PC-3 (cell line): ENCODE measurements at regions of chr5 and their contacts with region 1.

Region 1: DNA sequence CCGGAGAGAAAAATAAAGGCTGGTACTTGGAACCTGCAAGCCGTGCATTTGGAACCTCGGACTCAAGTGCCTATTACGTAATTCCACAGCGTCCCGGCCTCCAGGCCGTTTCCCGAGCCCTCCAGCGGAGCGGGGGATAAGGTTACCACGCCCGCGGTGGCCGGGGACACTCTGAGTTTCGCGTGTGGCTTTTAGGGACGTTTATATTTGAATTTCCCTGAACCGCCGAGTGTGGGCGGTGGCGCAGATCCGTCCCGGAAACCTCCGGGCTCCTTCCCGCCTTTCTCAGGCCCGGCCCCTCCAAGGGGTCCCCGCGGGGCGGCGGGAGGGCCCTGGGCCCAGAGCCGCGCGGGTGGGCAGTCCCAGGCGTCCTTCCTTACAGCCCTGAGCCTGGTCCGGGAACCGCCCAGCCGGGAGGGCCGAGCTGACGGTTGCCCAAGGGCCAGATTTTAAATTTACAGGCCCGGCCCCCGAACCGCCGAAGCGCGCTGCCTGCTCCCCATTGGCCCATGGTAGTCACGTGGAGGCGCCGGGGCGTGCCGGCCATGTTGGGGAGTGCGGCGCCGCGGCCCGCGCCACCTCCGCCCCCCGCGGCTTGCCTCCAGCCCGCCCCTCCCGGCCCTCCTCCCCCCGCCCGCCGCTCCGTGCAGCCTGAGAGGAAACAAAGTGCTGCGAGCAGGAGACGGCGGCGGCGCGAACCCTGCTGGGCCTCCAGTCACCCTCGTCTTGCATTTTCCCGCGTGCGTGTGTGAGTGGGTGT is at the start of gene LMNB1:
- DNase-seq: peak; percentile 96
- ATAC-seq: peak; percentile 70
- H3K4me3 ChIP-seq: peak within 1 kb of the TSS; percentile 81
- H3K27ac ChIP-seq: peak within 1 kb of the TSS; percentile 87
- H3K4me1 ChIP-seq: peaks cover 13% of the 10 kb centered on the region
- H3K27me3 ChIP-seq: no peaks in the 10 kb centered on the region
- CTCF ChIP-seq: no peak
- total RNA-seq, gene LMNB1: 119 and 151 TPM in 2 replicates

Region 2: GRCh38 chr5:126348855-126349635 is 427.6 kb before region 1 on chr5:
- CTCF ChIA-PET with region 1: no interaction called
- POLR2A ChIA-PET with region 1: no interaction called
- intact Hi-C with region 1: loop called (anchors 10 kb)
- DNase-seq: no peak
- ATAC-seq: no peak
- H3K4me3 ChIP-seq: no peak overlapping the region
- H3K27ac ChIP-seq: no peak overlapping the region
- H3K4me1 ChIP-seq: peaks cover 36% of the 10 kb centered on the region
- H3K27me3 ChIP-seq: no peaks in the 10 kb centered on the region
- CTCF ChIP-seq: no peak

Region 3: DNA sequence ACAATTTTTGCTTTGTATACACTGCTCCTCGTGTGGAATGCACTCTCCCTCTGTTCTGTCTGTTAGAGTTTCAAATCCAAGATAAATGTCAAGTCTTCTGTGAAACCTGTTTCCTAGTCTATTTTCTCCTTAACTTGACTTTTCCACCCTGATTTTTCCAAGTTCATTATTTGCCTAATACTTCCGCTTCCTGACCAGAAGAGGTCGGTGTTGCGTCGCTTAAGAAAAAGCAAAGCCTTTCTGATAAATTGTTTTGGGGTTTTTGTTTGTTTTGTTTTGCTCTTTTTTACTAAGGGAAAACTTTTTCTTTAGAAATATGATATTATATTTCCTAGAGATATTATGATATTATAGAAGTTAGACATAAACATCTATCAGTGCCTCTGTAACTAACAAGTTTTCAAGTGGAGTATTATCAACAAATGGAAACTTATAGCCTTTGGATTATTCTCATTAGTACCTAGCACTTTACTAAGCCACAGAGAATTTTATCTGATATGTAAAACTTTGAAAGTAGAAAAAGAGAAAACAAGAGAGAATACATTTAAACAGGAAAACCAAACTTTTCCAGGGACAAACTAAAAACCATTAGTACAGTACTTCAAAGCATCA is 120.2 kb before region 1 on chr5:
- CTCF ChIA-PET with region 1: no interaction called
- POLR2A ChIA-PET with region 1: interaction called, 7 read pairs
- intact Hi-C with region 1: loop called (anchors 1 kb)
- DNase-seq: peak; percentile 48
- ATAC-seq: no peak
- H3K4me3 ChIP-seq: no peak overlapping the region
- H3K27ac ChIP-seq: no peak overlapping the region
- H3K4me1 ChIP-seq: no peaks in the 10 kb centered on the region
- H3K27me3 ChIP-seq: no peaks in the 10 kb centered on the region
- CTCF ChIP-seq: peak; percentile 82

Region 4: GRCh38 chr5:126718246-126718868 is 58.3 kb before region 1 on chr5:
- CTCF ChIA-PET with region 1: no interaction called
- POLR2A ChIA-PET with region 1: no interaction called
- intact Hi-C with region 1: no loop called
- DNase-seq: no peak
- ATAC-seq: no peak
- H3K4me3 ChIP-seq: no peak overlapping the region
- H3K27ac ChIP-seq: no peak overlapping the region
- H3K4me1 ChIP-seq: no peaks in the 10 kb centered on the region
- H3K27me3 ChIP-seq: no peaks in the 10 kb centered on the region
- CTCF ChIP-seq: no peak

Region 5: DNA sequence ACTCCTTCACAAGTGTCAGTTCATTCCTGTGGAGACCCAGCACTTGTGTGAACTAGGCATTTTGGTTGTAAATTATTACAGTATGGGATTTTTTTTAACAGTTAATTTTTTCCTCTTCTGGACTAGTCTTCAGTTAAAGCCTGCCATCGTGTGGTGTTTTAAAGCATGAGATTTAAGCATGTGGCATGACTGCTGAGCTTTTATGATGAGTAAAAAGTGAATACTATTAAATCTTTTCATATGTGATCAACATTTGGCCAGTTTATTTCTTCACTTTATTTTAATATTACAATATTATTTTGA is 25.3 kb after region 1 on chr5:
- CTCF ChIA-PET with region 1: interaction called, 12 read pairs
- POLR2A ChIA-PET with region 1: interaction called, 10 read pairs
- intact Hi-C with region 1: loop called (anchors 1 kb)
- DNase-seq: peak; percentile 40
- ATAC-seq: peak; percentile 48; the same call in 1 of the 2 replicates
- H3K4me3 ChIP-seq: no peak overlapping the region
- H3K27ac ChIP-seq: no peak overlapping the region
- H3K4me1 ChIP-seq: peaks cover 9% of the 10 kb centered on the region; the same call in 1 of the 2 replicates
- H3K27me3 ChIP-seq: no peaks in the 10 kb centered on the region
- CTCF ChIP-seq: peak; percentile 57

Region 6: DNA sequence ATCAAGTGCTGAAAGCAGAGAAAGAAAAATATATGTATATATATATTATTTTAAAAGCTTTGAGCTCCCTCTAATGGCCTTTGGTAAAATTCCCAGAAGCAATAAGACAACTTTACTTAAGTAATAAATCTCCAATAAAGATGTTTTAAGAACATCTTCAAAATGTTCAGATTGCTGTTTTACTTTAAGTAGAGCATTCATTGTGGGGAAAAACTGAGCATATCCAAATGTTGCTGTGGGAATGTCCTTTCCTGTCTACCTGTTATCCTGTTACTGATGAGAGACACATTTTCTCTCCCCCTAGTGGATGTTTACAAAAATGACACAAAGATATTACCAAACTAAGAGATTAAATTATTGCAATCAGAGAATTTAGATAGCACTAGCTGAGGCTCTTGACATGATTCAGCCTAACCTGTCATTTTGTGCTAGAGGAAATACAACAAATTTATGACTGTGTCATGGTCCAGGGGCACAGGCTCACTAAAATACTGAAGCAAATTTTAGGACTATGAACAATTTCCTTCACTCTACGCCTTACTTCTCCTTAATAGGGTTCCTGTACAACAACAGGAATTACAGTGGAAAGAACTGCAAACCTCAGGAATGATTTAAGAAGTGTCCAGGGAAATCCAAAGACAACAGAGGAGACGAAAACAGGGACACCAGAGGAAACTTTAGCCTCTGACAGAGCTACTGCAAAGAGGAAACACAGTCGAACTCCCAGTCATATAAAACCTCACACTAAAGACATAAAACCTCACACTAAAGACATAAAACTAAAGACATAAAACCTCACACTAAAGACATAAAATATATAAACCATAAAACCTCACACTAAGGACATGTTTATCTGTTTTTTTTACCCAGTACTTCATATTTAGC is 716.4 kb after region 1 on chr5:
- CTCF ChIA-PET with region 1: interaction called, 10 read pairs
- POLR2A ChIA-PET with region 1: no interaction called
- intact Hi-C with region 1: no loop called
- DNase-seq: peak; percentile 48
- ATAC-seq: peak; percentile 76
- H3K4me3 ChIP-seq: no peak overlapping the region
- H3K27ac ChIP-seq: no peak overlapping the region
- H3K4me1 ChIP-seq: no peaks in the 10 kb centered on the region
- H3K27me3 ChIP-seq: peaks cover 61% of the 10 kb centered on the region
- CTCF ChIP-seq: peak; percentile 98